ENCODE measurements at regions of chr7 and their contacts with region 1.

Region 1: DNA sequence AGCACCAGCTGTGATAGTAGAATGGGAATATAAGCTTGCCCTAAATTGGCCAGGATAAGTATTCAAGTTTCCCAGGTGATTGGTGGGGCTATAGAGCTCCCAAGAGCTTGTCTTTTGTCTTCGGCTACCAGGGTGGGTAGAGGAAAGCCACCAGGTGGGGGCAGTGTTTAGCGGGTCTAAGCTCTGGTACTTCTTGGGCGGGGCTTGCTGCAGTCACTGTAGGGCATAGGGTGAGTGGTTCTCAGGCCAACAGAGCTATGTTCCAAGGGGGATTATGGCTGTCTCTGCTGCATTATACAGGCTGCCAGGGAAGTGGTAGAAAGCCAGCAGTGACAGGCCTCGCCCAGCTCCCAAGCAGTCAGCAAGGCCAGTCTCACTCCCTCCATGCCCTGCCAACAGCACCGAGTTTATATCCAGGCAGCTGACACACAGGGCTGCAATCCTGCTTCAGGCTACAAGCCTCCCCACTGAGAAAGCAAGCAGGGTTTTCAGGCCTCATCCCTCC is 110.7 kb downstream of the ZNF467 start:
- DNase-seq: peak; percentile 29 to 58 (median 43)
- H3K4me3 ChIP-seq: no peak overlapping the region
- H3K4me3 Mint-ChIP-seq: no peak overlapping the region
- H3K27ac ChIP-seq: no peak overlapping the region
- H3K27ac Mint-ChIP-seq: no peak overlapping the region
- H3K4me1 ChIP-seq: no peaks in the 10 kb centered on the region
- H3K4me1 Mint-ChIP-seq: no peaks in the 10 kb centered on the region
- H3K27me3 ChIP-seq: no peaks in the 10 kb centered on the region
- H3K27me3 Mint-ChIP-seq: peaks cover 33 to 68% of the 10 kb centered on the region in 2 donors

Region 2: GRCh38 chr7:149742075-149742701 is 79.5 kb after region 1 on chr7:
- CTCF ChIA-PET with region 1: interaction called, 13 read pairs
- POLR2A ChIA-PET with region 1: no interaction called
- DNase-seq: peak; percentile 28 to 72 (median 40)
- H3K4me3 ChIP-seq: peak overlapping the region; percentile 43
- H3K4me3 Mint-ChIP-seq: peak overlapping the region; percentile 61 to 85 (median 72)
- H3K27ac ChIP-seq: no peak overlapping the region
- H3K27ac Mint-ChIP-seq: peak overlapping the region in 1 of 8 donors; percentile 51
- H3K4me1 ChIP-seq: peaks cover 10% of the 10 kb centered on the region
- H3K4me1 Mint-ChIP-seq: peaks cover 10 to 11% (median 10%) of the 10 kb centered on the region in 3 donors
- H3K27me3 ChIP-seq: peaks cover 25% of the 10 kb centered on the region
- H3K27me3 Mint-ChIP-seq: peaks cover 39 to 55% of the 10 kb centered on the region in 2 donors

Region 3: DNA sequence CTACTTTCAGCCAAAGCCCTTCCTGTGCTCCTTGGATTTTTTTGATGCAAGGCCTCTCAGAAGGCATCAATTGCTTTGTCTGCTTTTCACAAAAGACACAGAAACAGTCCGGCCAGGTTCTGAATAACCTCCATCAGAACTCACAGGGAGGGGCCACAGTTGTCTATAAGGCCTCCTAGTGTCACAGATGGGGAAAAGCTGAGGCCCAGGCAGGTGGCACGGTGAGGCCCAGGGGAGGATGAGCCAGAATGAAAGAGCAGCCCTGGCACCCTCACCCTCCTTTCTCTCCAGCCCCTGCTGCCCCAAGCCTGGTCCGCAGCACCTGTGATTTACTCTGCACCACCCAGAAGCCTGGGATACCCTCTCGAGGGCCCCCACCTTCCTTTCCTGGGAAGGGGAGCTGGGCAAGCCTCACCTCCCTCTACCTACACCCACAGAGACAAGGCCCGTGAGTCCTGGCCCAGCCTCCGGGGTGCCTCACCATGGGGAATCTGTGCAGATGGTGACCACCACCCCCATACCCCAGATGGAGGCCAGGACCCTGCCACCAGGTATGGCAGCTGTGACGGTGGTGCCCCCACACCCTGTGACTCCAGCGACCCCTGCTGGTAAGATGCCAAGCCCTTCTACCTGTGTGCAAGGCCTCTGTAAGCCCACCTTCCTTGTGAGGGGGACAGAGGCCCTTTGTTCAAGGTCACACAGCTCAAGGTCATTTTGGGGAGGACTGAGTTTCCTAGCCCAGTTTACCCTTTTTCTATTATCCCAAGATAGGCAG is 136.9 kb after region 1 on chr7:
- CTCF ChIA-PET with region 1: interaction called, 10 read pairs
- POLR2A ChIA-PET with region 1: no interaction called
- DNase-seq: peak; percentile 32 to 70 (median 41)
- H3K4me3 ChIP-seq: no peak overlapping the region
- H3K4me3 Mint-ChIP-seq: no peak overlapping the region
- H3K27ac ChIP-seq: no peak overlapping the region
- H3K27ac Mint-ChIP-seq: peak overlapping the region in 1 of 8 donors; percentile 33
- H3K4me1 ChIP-seq: no peaks in the 10 kb centered on the region
- H3K4me1 Mint-ChIP-seq: no peaks in the 10 kb centered on the region
- H3K27me3 ChIP-seq: no peaks in the 10 kb centered on the region
- H3K27me3 Mint-ChIP-seq: peaks cover 0 to under 1% of the 10 kb centered on the region in 2 donors

Measured in CD8-positive, alpha-beta memory T cell (primary cell).